ENCODE measurements at regions of chr20 and their contacts with region 1.

Region 1: GRCh38 chr20:35297155-35297554 is 4.9 kb upstream of the FAM83C start:
- DNase-seq: no peak
- ATAC-seq: no peak
- H3K4me3 ChIP-seq: no peak overlapping the region
- H3K27ac ChIP-seq: no peak overlapping the region
- H3K4me1 ChIP-seq: no peaks in the 10 kb centered on the region
- H3K27me3 ChIP-seq: peaks cover 0 to 3% of the 10 kb centered on the region in 2 donors
- CTCF ChIP-seq: no peak
- POLR2A ChIP-seq: no peak

Region 2: GRCh38 chr20:35171753-35172433 is 125.3 kb before region 1 on chr20 and contains the start of gene PROCR:
- intact Hi-C with region 1: no loop called
- DNase-seq: peak; percentile 64 to 81 (median 76)
- ATAC-seq: peak; percentile 78
- H3K4me3 ChIP-seq: no peak within 1 kb of the TSS
- H3K27ac ChIP-seq: peak within 1 kb of the TSS in 3 of 4 donors; percentile 23 to 39 (median 35)
- H3K4me1 ChIP-seq: peaks cover 11% of the 10 kb centered on the region
- H3K27me3 ChIP-seq: no peaks in the 10 kb centered on the region
- CTCF ChIP-seq: no peak
- POLR2A ChIP-seq: no peak
- total RNA-seq, gene PROCR: 4.0 to 14.8 TPM

Region 3: DNA sequence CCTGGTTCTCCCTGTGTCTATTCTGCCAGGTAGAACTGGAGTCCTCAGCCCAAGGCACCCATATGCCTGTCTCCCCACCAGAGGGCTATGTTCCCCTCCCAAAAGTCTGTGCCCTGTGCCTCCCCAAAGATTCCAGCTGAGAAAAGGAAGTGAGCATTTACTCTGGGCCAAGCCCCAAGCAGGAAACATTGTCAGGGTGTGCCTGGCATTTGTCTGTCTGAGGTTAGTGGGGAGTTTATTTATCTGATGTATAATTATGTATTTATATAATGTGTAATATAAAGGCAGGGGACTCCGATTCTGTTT is 135.2 kb after region 1 on chr20:
- intact Hi-C with region 1: loop called (anchors 10 kb)
- DNase-seq: no peak
- ATAC-seq: no peak
- H3K4me3 ChIP-seq: no peak overlapping the region
- H3K27ac ChIP-seq: no peak overlapping the region
- H3K4me1 ChIP-seq: no peaks in the 10 kb centered on the region
- H3K27me3 ChIP-seq: no peaks in the 10 kb centered on the region
- CTCF ChIP-seq: no peak
- POLR2A ChIP-seq: no peak

Measured in body of pancreas (tissue), 4 donors.